ENCODE measurements at regions of chr18 and their contacts with region 1.

Region 1: GRCh38 chr18:24426398-24427294 is at the start of gene IMPACT:
- DNase-seq: peak; percentile 94
- ATAC-seq: peak; percentile 98
- total RNA-seq, gene IMPACT: 19.8 TPM

Region 2: GRCh38 chr18:24368749-24369148 is 57.9 kb before region 1 on chr18:
- intact Hi-C with region 1: loop called (anchors 10 kb)
- DNase-seq: no peak
- ATAC-seq: no peak

Region 3: DNA sequence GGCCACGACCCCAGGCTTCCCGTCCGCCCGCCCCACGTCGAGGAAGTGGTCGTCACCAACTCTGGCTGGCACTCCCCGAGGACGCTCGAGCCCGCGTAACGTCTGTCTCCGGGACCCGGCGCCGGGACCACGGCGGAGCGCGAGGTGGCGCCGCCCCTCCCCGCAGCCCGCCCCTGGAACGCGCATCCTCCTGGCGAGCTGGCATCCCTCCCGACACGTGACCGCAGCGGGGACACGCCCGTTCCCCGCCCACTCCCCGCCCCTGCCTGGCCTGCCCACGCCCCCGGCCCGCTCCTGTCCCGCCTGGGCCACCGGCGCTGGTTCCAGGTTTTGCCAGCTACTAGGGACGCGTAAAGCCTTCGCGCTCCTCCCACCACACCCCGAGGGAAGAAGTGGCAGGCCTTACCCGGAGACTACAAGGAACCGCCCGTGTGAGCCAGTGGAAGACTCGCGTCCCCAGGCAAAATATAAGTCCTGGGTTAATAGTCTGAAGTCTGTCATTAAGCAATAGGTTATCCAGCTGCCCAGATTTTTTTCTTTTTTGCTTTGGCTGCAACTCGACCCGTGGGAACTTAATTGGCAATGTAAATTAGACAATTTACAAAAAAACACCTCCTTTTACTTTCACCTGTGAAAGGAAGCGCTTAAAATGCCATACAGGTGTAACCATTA is 28.8 kb before region 1 on chr18 and contains the start of gene OSBPL1A:
- intact Hi-C with region 1: loop called (anchors 1 kb)
- DNase-seq: peak; percentile 97
- ATAC-seq: peak; percentile 97
- total RNA-seq, gene OSBPL1A: 78.9 TPM

Measured in Right ventricle myocardium inferior (tissue), 1 donor.